Activated CD4-positive, alpha-beta memory T cell treated with anti-CD3 and anti-CD28 coated beads, Interleukin-2, amount 10 ng/mL, durations not matched to agents 7 days and 5 days (primary cell): ENCODE measurements at regions of chr2 and their contacts with region 1.

Region 1: GRCh38 chr2:68943581-68944568 is 8.8 kb downstream of the GKN2 start:
- DNase-seq: peak; percentile 50
- H3K4me3 Mint-ChIP-seq: no peak overlapping the region
- H3K27ac Mint-ChIP-seq: no peak overlapping the region
- H3K4me1 Mint-ChIP-seq: peaks cover 4% of the 10 kb centered on the region
- H3K27me3 Mint-ChIP-seq: peaks cover 64% of the 10 kb centered on the region

Region 2: GRCh38 chr2:68828887-68829708 is 114.8 kb before region 1 on chr2:
- CTCF ChIA-PET with region 1: no interaction called
- POLR2A ChIA-PET with region 1: no interaction called
- DNase-seq: peak; percentile 83
- H3K4me3 Mint-ChIP-seq: peak overlapping the region; percentile 61
- H3K27ac Mint-ChIP-seq: peak overlapping the region; percentile 93
- H3K4me1 Mint-ChIP-seq: peaks cover 69% of the 10 kb centered on the region
- H3K27me3 Mint-ChIP-seq: no peaks in the 10 kb centered on the region

Region 3: DNA sequence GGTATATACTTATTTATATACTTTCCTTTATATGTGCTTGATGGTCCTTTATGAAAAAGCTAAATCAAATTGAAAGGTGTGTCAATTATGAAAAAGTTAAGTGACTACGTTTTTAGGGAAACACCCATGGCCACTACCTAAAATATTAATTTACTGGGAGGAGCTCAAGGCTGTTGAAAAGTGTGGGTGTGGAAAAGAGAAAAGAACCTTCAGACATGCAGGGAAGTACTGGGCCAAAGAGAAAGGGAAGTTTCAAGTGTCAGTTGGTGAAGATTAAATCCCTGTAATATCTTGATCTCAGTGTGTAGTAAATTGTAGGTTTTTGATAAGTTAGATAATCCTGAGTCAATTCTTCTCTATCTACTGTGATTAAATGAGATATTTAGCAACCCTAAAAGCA is 24.3 kb after region 1 on chr2:
- CTCF ChIA-PET with region 1: interaction called, 10 read pairs
- POLR2A ChIA-PET with region 1: no interaction called
- DNase-seq: no peak
- H3K4me3 Mint-ChIP-seq: no peak overlapping the region
- H3K27ac Mint-ChIP-seq: no peak overlapping the region
- H3K4me1 Mint-ChIP-seq: no peaks in the 10 kb centered on the region
- H3K27me3 Mint-ChIP-seq: peaks cover 19% of the 10 kb centered on the region

Region 4: GRCh38 chr2:69643602-69644505 is 700.0 kb after region 1 on chr2 and contains the start of gene AAK1:
- CTCF ChIA-PET with region 1: no interaction called
- POLR2A ChIA-PET with region 1: no interaction called
- DNase-seq: peak; percentile 88
- H3K4me3 Mint-ChIP-seq: peak within 1 kb of the TSS; percentile 88
- H3K27ac Mint-ChIP-seq: peak within 1 kb of the TSS; percentile 99
- H3K4me1 Mint-ChIP-seq: peaks cover 60% of the 10 kb centered on the region
- H3K27me3 Mint-ChIP-seq: no peaks in the 10 kb centered on the region
- total RNA-seq, gene AAK1: 115 to 121 TPM